Esophagus squamous epithelium (tissue), 5 donors: ENCODE measurements at regions of chr19 and their contacts with region 1.

Region 1: DNA sequence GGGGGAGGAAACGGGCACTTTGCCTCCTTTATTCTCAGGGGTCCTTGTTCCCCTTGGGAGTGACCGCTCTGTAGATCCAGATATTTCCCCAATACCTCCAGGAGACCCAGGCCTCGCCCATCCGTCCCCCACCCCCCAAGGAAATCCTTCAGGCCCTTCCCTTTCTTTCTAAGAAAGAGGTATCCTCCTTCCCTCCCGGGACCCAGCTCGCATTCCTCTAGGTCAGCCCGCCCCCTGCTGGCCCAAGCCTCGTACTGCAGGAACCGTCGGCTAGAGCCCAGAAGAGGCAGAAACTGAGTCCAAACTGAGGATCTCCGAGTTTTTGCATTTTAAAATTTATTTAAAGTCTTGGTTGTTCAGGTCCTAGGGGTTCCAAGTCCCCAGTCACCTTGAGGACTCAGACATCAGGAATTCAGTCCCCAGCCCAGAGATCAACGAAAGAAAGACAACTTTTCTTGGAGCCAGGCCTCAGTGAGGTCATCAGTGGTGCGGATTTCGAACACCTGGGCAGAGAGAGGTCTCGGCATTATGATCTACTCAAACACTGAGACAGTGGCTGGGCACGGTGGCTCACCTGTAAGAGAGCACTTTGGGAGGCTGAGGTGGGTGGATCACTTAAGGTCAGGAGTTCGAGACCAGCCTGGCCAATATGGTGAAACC is 7.5 kb upstream of the LRFN1 start:
- DNase-seq: no peak
- H3K4me3 ChIP-seq: no peak overlapping the region
- H3K27ac ChIP-seq: no peak overlapping the region
- H3K4me1 ChIP-seq: peaks cover 0 to 8% (median 0%) of the 10 kb centered on the region in 3 donors
- H3K27me3 ChIP-seq: peaks cover 0 to 4% (median 0%) of the 10 kb centered on the region in 4 donors
- CTCF ChIP-seq: peak; percentile 82 to 98 (median 97)
- POLR2A ChIP-seq: no peak

Region 2: DNA sequence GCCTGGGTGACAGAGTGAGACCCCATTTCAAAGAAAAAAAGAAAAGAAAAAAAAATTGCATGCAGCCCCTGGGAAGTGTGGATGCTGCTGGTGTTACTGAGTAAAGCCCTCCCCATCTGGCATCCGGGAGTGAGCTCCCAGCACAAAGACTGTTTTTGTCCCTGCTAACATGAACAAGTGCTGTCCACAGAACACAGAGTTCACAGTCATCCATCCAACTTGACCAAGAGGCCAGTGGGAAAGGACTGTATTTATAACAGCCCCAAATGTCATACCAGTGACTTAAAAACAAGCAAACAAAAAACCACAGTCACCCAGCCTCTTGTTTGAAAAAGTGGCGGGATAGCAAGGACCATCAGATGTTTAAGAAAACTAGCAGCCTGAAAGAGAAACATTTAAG is 363.4 kb before region 1 on chr19:
- intact Hi-C with region 1: loop called (anchors 10 kb)
- DNase-seq: no peak
- H3K4me3 ChIP-seq: no peak overlapping the region
- H3K27ac ChIP-seq: no peak overlapping the region
- H3K4me1 ChIP-seq: peaks cover 0 to 13% (median 0%) of the 10 kb centered on the region in 3 donors
- H3K27me3 ChIP-seq: no peaks in the 10 kb centered on the region
- CTCF ChIP-seq: no peak
- POLR2A ChIP-seq: no peak

Region 3: GRCh38 chr19:39124136-39124764 is 203.9 kb before region 1 on chr19:
- intact Hi-C with region 1: loop called (anchors 5 kb)
- DNase-seq: no peak
- H3K4me3 ChIP-seq: no peak overlapping the region
- H3K27ac ChIP-seq: no peak overlapping the region
- H3K4me1 ChIP-seq: peaks cover 22 to 60% (median 25%) of the 10 kb centered on the region in 3 donors
- H3K27me3 ChIP-seq: peaks cover 0 to 6% (median 0%) of the 10 kb centered on the region in 4 donors
- CTCF ChIP-seq: no peak
- POLR2A ChIP-seq: no peak

Region 4: GRCh38 chr19:39270036-39270871 is 57.9 kb before region 1 on chr19:
- intact Hi-C with region 1: no loop called
- DNase-seq: no peak
- H3K4me3 ChIP-seq: no peak overlapping the region
- H3K27ac ChIP-seq: no peak overlapping the region
- H3K4me1 ChIP-seq: peaks cover 0 to 3% (median 0%) of the 10 kb centered on the region in 3 donors
- H3K27me3 ChIP-seq: peaks cover 0 to 66% (median under 1%) of the 10 kb centered on the region in 4 donors
- CTCF ChIP-seq: no peak
- POLR2A ChIP-seq: no peak